ENCODE measurements at regions of chr5 and their contacts with region 1.

Region 1: DNA sequence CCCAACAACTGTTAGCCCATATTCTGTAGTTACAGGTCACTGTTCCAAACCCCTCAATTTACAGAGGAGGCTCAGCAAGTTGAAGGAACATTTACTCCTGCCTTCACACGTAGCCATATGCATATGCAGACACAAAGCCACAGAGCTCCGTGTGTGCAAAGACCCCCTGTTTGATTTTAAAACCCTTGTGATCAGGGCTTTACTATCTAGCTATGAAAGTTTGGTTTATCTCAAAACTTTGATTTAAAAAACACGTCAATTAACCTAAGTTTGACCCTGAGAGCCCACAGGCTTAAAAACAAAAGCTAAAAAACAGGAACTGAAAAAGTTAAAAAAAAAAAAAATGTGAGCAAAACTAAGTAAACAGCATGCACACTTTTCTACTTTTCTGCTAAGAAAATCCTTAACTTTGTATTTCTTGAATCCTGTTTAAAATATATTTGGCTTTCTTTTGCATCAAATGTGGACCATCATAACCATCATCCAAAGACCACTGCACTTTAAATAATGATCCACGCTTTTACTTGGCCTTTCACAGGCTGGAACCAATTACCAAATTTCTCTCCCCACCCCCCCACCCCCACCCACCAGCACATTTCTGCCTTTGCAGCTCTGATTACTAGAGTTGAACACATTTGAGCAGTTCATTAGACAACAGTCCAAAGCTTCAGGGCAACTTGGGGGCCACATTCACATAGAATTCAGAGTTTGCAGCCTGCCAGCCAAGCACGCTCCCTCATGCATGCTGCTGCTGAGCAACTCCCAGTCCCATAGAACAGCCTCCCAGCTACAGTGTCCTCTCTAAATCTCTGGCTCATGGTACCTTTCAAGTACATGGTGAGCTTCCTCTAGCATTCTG is 128.8 kb upstream of the MAP3K1 start:
- DNase-seq: no peak
- H3K4me3 Mint-ChIP-seq: no peak overlapping the region
- H3K27ac Mint-ChIP-seq: no peak overlapping the region
- H3K4me1 Mint-ChIP-seq: peaks cover 61% of the 10 kb centered on the region
- H3K27me3 Mint-ChIP-seq: no peaks in the 10 kb centered on the region

Region 2: GRCh38 chr5:56698463-56699381 is 12.2 kb after region 1 on chr5:
- CTCF ChIA-PET with region 1: interaction called, 4 read pairs
- intact Hi-C with region 1: loop called (anchors 1 kb)
- DNase-seq: no peak
- H3K4me3 Mint-ChIP-seq: no peak overlapping the region
- H3K27ac Mint-ChIP-seq: no peak overlapping the region
- H3K4me1 Mint-ChIP-seq: peaks cover 65% of the 10 kb centered on the region
- H3K27me3 Mint-ChIP-seq: no peaks in the 10 kb centered on the region

Region 3: GRCh38 chr5:56717253-56717987 is 30.9 kb after region 1 on chr5:
- CTCF ChIA-PET with region 1: no interaction called
- intact Hi-C with region 1: no loop called
- DNase-seq: no peak
- H3K4me3 Mint-ChIP-seq: no peak overlapping the region
- H3K27ac Mint-ChIP-seq: no peak overlapping the region
- H3K4me1 Mint-ChIP-seq: peaks cover 17% of the 10 kb centered on the region
- H3K27me3 Mint-ChIP-seq: no peaks in the 10 kb centered on the region

Region 4: DNA sequence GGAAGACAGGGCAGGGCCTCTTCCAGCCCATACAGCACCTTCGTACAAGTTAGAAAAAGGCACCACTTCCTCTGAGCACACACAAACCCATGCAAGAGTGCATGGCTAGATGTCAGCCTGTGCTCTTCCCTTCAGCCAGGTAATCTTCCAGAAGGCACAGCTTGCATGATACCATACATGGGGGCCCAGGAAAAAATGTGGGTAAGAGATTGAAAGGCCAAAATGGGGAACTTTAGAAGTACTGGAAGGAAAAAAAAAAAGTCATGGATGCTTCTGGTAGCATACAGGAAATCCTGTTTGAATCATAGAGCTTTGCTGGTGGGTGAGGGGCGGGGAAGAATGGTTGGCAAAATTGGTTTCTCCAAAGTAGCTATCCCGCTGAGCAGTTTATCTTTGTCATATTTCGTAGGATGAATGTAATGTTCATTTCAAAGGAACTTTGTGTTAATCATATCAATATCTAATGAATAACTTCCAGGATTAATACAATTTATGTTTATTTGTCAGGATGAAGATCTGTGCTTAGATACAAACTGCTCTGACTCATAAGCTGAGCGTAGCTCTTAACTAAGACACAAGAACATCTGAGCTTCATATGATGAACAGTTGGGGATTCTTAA is 50.5 kb after region 1 on chr5:
- CTCF ChIA-PET with region 1: no interaction called
- intact Hi-C with region 1: loop called (anchors 2 kb)
- DNase-seq: peak; percentile 32
- H3K4me3 Mint-ChIP-seq: no peak overlapping the region
- H3K27ac Mint-ChIP-seq: peak overlapping the region; percentile 9
- H3K4me1 Mint-ChIP-seq: peaks cover 35% of the 10 kb centered on the region
- H3K27me3 Mint-ChIP-seq: no peaks in the 10 kb centered on the region

Measured in activated naive CD4-positive, alpha-beta T cell treated with anti-CD3 and anti-CD28 coated beads for 36 hours (primary cell).